Common myeloid progenitor, CD34-positive (primary cell): ENCODE measurements at regions of chr15 and their contacts with region 1.

Region 1: DNA sequence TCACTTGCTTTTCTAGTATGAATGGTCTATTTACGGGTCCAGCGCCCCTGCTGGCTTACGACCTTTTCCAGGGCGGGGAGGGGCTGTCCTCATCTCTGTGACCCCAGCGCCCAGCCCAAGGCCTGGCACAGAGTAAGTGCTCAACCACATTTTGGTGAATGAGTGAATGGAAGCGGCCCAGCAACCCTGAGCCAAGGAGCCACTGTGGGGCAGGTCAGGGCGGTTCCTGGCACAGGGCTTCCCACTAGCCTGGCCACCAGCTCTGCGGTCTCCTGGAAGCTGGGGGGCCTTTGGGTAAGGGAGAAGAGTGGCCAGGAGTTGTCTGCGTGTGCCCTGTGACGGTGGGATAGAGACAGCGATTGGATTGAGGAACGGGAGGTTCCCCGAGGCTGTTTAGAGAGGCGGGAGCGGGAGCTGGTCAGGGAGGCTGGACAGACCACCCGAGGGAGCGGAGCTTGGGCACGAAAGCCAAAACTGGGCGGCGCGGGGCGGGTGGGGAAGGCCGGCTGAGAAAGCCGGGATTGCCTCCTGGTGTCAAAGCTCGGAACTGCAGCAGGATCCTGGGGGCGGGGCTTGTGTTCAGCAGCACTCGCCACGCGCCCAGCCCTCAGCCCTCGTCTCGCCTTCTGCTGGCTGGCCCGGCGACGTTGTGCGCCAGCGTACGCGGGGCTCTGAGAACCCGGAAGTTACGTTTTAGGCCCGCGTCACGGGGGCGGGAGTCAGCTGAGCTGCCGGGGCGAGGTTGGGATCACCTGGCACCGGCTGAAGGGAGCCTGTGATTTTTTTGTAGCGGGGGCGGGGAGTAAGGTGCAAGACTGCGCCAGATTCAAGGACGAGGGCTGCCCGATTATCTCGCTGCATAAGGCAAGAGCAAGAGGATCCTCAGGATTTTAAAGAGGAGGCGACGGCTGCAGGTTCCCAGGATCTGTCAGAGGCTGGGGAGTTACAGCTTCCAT is at the start of gene VPS18:
- DNase-seq: peak; percentile 97 to 98 (median 98)
- H3K4me3 ChIP-seq: peak within 1 kb of the TSS; percentile 82 to 98 (median 89)
- H3K27ac ChIP-seq: peak within 1 kb of the TSS; percentile 75 to 85
- H3K4me1 ChIP-seq: peaks cover 7 to 31% (median 25%) of the 10 kb centered on the region in 4 experiments
- H3K27me3 ChIP-seq: peaks cover 0 to 2% (median 0%) of the 10 kb centered on the region in 5 experiments

Region 2: GRCh38 chr15:40857601-40858341 is 36.2 kb before region 1 on chr15:
- CTCF ChIA-PET with region 1: interaction called, 231 read pairs
- POLR2A ChIA-PET with region 1: interaction called, 9 read pairs
- DNase-seq: peak; percentile 59 to 80 (median 73)
- H3K4me3 ChIP-seq: no peak overlapping the region
- H3K27ac ChIP-seq: no peak overlapping the region
- H3K4me1 ChIP-seq: peaks cover 0 to 10% (median 4%) of the 10 kb centered on the region in 4 experiments
- H3K27me3 ChIP-seq: no peaks in the 10 kb centered on the region

Region 3: DNA sequence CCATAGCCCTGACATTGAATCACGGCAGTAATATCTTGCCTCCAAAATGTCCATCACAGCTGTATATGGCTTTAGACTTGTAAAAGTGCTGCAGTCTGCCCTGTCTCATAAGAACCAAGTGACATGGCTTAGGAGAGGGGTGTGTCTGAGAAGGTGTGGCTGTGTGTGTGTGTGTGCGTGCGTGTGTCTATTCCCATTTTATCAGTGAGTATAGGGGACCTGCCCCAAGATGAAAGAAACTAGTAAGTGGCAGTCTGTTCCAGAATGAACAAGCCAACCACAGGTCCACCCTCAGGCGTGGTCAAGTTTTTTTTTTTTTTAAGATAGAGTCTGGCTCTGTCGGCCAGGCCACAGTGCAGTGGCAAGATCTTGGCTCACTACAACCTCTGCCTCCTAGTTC is 14.4 kb before region 1 on chr15:
- CTCF ChIA-PET with region 1: interaction called, 41 read pairs
- POLR2A ChIA-PET with region 1: no interaction called
- DNase-seq: no peak
- H3K4me3 ChIP-seq: no peak overlapping the region
- H3K27ac ChIP-seq: no peak overlapping the region
- H3K4me1 ChIP-seq: peaks cover 0 to 10% (median under 1%) of the 10 kb centered on the region in 4 experiments
- H3K27me3 ChIP-seq: no peaks in the 10 kb centered on the region

Region 4: GRCh38 chr15:41022487-41023090 is 128.6 kb after region 1 on chr15:
- CTCF ChIA-PET with region 1: interaction called, 491 read pairs
- POLR2A ChIA-PET with region 1: no interaction called
- DNase-seq: peak; percentile 59 to 81 (median 76)
- H3K4me3 ChIP-seq: no peak overlapping the region
- H3K27ac ChIP-seq: no peak overlapping the region
- H3K4me1 ChIP-seq: peaks cover 1 to 10% (median 3%) of the 10 kb centered on the region in 4 experiments
- H3K27me3 ChIP-seq: no peaks in the 10 kb centered on the region

Region 5: GRCh38 chr15:41073028-41073427 is 179.0 kb after region 1 on chr15:
- CTCF ChIA-PET with region 1: no interaction called
- POLR2A ChIA-PET with region 1: no interaction called
- DNase-seq: no peak
- H3K4me3 ChIP-seq: no peak overlapping the region
- H3K27ac ChIP-seq: no peak overlapping the region
- H3K4me1 ChIP-seq: no peaks in the 10 kb centered on the region
- H3K27me3 ChIP-seq: no peaks in the 10 kb centered on the region